HepG2 (cell line): ENCODE measurements at regions of chr9 and their contacts with region 1.

Region 1: GRCh38 chr9:101530077-101530711 is 3.5 kb upstream of the RNF20 start:
- DNase-seq: peak; percentile 67
- ATAC-seq: peak; percentile 45
- H3K4me3 ChIP-seq: no peak overlapping the region
- H3K27ac ChIP-seq: no peak overlapping the region
- H3K4me1 ChIP-seq: peaks cover 13% of the 10 kb centered on the region
- H3K27me3 ChIP-seq: no peaks in the 10 kb centered on the region; a peak in 2 of 5 replicates
- CTCF ChIP-seq: peak; percentile 81
- EP300 ChIP-seq: no peak
- POLR2A ChIP-seq: no peak
- RAD21 ChIP-seq: peak; percentile 47; the same call in 1 of the 2 replicates

Region 2: GRCh38 chr9:100714372-100715099 is 815.7 kb before region 1 on chr9:
- CTCF ChIA-PET with region 1: no interaction called
- POLR2A ChIA-PET with region 1: no interaction called
- in situ Hi-C with region 1: loop called (anchors 25 kb)
- intact Hi-C with region 1: no loop called
- DNase-seq: peak; percentile 48
- ATAC-seq: peak; percentile 91
- H3K4me3 ChIP-seq: no peak overlapping the region
- H3K27ac ChIP-seq: no peak overlapping the region
- H3K4me1 ChIP-seq: no peaks in the 10 kb centered on the region
- H3K27me3 ChIP-seq: no peaks in the 10 kb centered on the region
- CTCF ChIP-seq: peak; percentile 82
- EP300 ChIP-seq: no peak
- POLR2A ChIP-seq: no peak
- RAD21 ChIP-seq: peak; percentile 37; the same call in 1 of the 2 replicates

Region 3: GRCh38 chr9:101126556-101126955 is 403.6 kb before region 1 on chr9:
- CTCF ChIA-PET with region 1: no interaction called
- POLR2A ChIA-PET with region 1: no interaction called
- in situ Hi-C with region 1: loop called (anchors 10 kb)
- intact Hi-C with region 1: no loop called
- DNase-seq: no peak
- ATAC-seq: no peak
- H3K4me3 ChIP-seq: no peak overlapping the region
- H3K27ac ChIP-seq: no peak overlapping the region
- H3K4me1 ChIP-seq: peaks cover 40% of the 10 kb centered on the region
- H3K27me3 ChIP-seq: no peaks in the 10 kb centered on the region
- CTCF ChIP-seq: no peak
- EP300 ChIP-seq: no peak
- POLR2A ChIP-seq: no peak
- RAD21 ChIP-seq: no peak

Region 4: GRCh38 chr9:101326501-101326900 is 203.7 kb before region 1 on chr9:
- CTCF ChIA-PET with region 1: no interaction called
- POLR2A ChIA-PET with region 1: no interaction called
- in situ Hi-C with region 1: loop called (anchors 10 kb)
- intact Hi-C with region 1: no loop called
- DNase-seq: peak; percentile 16
- ATAC-seq: no peak
- H3K4me3 ChIP-seq: no peak overlapping the region
- H3K27ac ChIP-seq: peak overlapping the region; percentile 97
- H3K4me1 ChIP-seq: peaks cover 74% of the 10 kb centered on the region
- H3K27me3 ChIP-seq: no peaks in the 10 kb centered on the region
- CTCF ChIP-seq: no peak
- EP300 ChIP-seq: peak in 1 of 2 experiments; percentile 66; a peak in 1 of 4 replicates
- POLR2A ChIP-seq: peak in 1 of 2 experiments; percentile 48; a peak in 1 of 4 replicates
- RAD21 ChIP-seq: no peak

Region 5: GRCh38 chr9:101443364-101443771 is 86.8 kb before region 1 on chr9:
- CTCF ChIA-PET with region 1: no interaction called
- POLR2A ChIA-PET with region 1: interaction called, 12 read pairs
- in situ Hi-C with region 1: no loop called
- intact Hi-C with region 1: no loop called
- DNase-seq: no peak
- ATAC-seq: no peak
- H3K4me3 ChIP-seq: no peak overlapping the region
- H3K27ac ChIP-seq: no peak overlapping the region
- H3K4me1 ChIP-seq: peaks cover 86% of the 10 kb centered on the region
- H3K27me3 ChIP-seq: no peaks in the 10 kb centered on the region
- CTCF ChIP-seq: no peak
- EP300 ChIP-seq: no peak
- POLR2A ChIP-seq: no peak
- RAD21 ChIP-seq: no peak

Region 6: DNA sequence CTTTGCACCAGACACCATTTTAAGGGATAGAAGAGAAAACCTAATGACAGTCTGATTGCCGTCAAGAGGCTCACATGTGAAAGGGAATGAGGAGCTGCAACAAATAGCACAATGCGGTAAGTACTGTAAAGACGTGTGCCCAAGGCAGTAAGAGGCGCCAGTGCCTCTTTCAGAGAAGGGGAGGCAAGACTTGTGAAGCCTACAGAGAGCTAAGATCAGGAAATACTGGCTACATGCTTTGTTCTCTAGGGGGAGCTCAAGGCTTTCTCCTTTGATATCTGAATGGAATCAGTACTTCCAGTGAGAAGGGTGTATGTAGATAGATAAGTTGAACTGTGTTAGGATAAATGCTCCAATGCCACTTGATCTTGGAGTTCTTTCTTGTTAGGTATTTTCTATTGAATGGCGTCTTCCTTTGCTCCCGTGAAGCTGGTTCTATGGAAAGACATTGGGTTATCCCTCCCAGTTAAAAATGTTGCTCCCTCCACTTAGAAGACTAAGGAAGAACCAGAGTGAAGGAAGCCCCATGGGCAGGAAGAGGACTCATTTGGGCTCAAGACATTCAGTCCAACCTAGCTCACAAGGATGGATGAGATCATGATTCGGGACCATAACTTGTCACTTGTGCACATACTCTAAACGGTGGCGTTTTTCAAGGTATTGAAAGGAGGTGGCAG is 71.1 kb before region 1 on chr9:
- CTCF ChIA-PET with region 1: interaction called, 32 read pairs
- POLR2A ChIA-PET with region 1: interaction called, 3 read pairs
- in situ Hi-C with region 1: loop called (anchors 5 kb)
- intact Hi-C with region 1: loop called (anchors 1 kb)
- DNase-seq: peak; percentile 86
- ATAC-seq: peak; percentile 95
- H3K4me3 ChIP-seq: no peak overlapping the region
- H3K27ac ChIP-seq: no peak overlapping the region
- H3K4me1 ChIP-seq: peaks cover 52% of the 10 kb centered on the region
- H3K27me3 ChIP-seq: no peaks in the 10 kb centered on the region
- CTCF ChIP-seq: peak; percentile 91
- EP300 ChIP-seq: no peak
- POLR2A ChIP-seq: no peak
- RAD21 ChIP-seq: peak; percentile 80

Region 7: GRCh38 chr9:101465392-101465791 is 64.8 kb before region 1 on chr9:
- CTCF ChIA-PET with region 1: interaction called, 6 read pairs
- POLR2A ChIA-PET with region 1: no interaction called
- in situ Hi-C with region 1: no loop called
- intact Hi-C with region 1: loop called (anchors 1 kb)
- DNase-seq: peak; percentile 69
- ATAC-seq: peak; percentile 93
- H3K4me3 ChIP-seq: no peak overlapping the region
- H3K27ac ChIP-seq: no peak overlapping the region
- H3K4me1 ChIP-seq: peaks cover 26% of the 10 kb centered on the region
- H3K27me3 ChIP-seq: no peaks in the 10 kb centered on the region
- CTCF ChIP-seq: peak; percentile 69
- EP300 ChIP-seq: no peak
- POLR2A ChIP-seq: no peak
- RAD21 ChIP-seq: no peak